ENCODE measurements at regions of chr15 and their contacts with region 1.

Region 1: GRCh38 chr15:51697163-51697562 is 15.9 kb downstream of the SCG3 start:
- DNase-seq: no peak
- ATAC-seq: no peak

Region 2: GRCh38 chr15:51443282-51443914 is 253.8 kb before region 1 on chr15:
- intact Hi-C with region 1: no loop called
- DNase-seq: no peak
- ATAC-seq: peak; percentile 12

Region 3: DNA sequence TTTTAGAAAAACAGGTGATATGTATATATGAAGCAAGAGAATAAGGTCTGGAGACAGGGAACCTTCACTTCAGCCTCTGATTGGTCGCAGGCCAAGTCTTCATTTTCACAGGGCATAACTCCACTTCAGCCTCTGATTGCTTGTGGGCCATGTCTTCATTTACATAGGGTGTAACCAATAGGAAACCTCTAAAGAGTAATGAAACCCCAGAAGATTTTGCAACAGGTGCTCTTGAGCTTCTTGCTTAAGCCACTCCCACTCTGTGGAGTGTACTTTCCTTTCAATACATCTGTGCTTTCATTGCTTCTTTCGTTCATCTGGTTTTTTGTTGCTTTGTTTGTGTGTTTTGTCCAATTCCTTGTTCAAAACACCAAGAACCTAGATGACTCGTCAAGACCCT is 38.5 kb before region 1 on chr15:
- intact Hi-C with region 1: loop called in 1 of 2 experiments (anchors 5 kb)
- DNase-seq: no peak
- ATAC-seq: no peak

Region 4: DNA sequence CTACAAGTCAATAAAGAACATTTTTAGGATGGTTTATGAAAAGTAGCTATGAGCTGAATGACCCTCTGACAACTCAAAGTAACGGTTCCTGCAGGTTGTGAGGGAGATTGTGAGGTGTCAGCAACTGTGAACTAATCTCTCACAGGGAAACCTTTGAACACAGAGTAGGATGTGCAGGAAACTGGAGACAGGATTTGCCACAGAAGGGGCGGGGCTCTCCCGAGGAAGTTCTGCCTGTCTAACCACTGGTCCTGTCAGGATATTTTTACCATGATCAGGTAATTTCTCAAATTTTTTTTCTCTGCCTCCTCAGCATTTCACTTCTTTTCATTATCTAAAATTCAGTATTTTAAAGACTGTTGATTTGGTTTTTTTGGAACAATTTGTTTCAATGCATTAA is 241.1 kb after region 1 on chr15:
- intact Hi-C with region 1: no loop called
- DNase-seq: no peak
- ATAC-seq: peak; percentile 58